Mammary epithelial cell (primary cell): ENCODE measurements at regions of chr14 and their contacts with region 1.

Region 1: DNA sequence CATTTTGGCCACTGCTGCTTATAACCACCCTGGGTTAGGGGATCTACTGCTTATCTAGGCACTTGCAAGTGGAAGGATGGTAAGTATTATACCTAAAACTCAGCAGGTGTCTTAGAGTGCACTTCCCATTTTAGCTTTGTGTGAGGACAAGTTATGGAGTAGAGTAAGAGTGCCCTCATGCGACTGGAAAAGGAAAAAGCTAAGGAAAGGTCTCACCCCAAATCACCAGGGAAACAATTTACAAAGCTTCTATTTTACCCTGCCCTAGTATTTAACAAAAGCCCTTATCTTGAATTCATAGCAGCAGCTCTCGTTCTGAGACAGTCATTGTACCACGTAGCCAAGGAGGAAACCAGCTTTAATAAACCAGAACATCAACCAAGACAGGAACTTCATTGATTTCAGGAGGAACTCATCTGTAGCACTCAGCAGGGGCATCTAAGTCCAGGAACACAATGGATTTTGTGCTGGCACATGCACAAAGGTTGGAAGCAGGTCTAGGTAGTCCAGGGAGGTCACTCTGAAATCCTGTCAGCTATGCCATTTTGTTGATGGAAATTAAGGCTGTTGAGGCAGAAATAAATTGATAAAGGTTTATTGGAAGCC is 2.9 kb downstream of the RDH12 start:
- DNase-seq: peak; percentile 54
- H3K4me3 ChIP-seq: no peak overlapping the region
- H3K27ac ChIP-seq: no peak overlapping the region
- H3K4me1 ChIP-seq: peaks cover 10% of the 10 kb centered on the region
- H3K27me3 ChIP-seq: no peaks in the 10 kb centered on the region
- CTCF ChIP-seq: peak; percentile 79 to 85

Region 2: GRCh38 chr14:67285876-67286452 is 418.6 kb before region 1 on chr14:
- CTCF ChIA-PET with region 1: no interaction called
- dilution Hi-C with region 1: no loop called
- in situ Hi-C with region 1: no loop called
- intact Hi-C with region 1: no loop called
- DNase-seq: peak; percentile 11
- H3K4me3 ChIP-seq: no peak overlapping the region
- H3K27ac ChIP-seq: no peak overlapping the region
- H3K4me1 ChIP-seq: no peaks in the 10 kb centered on the region
- H3K27me3 ChIP-seq: no peaks in the 10 kb centered on the region
- CTCF ChIP-seq: peak; percentile 38 to 53

Region 3: GRCh38 chr14:67426983-67427606 is 277.5 kb before region 1 on chr14:
- CTCF ChIA-PET with region 1: no interaction called
- dilution Hi-C with region 1: no loop called
- in situ Hi-C with region 1: loop called in 1 of 2 experiments (anchors 25 kb)
- intact Hi-C with region 1: loop called (anchors 1 kb)
- DNase-seq: peak; percentile 66
- H3K4me3 ChIP-seq: no peak overlapping the region
- H3K27ac ChIP-seq: no peak overlapping the region
- H3K4me1 ChIP-seq: peaks cover 12% of the 10 kb centered on the region
- H3K27me3 ChIP-seq: no peaks in the 10 kb centered on the region
- CTCF ChIP-seq: peak; percentile 75 to 84

Region 4: DNA sequence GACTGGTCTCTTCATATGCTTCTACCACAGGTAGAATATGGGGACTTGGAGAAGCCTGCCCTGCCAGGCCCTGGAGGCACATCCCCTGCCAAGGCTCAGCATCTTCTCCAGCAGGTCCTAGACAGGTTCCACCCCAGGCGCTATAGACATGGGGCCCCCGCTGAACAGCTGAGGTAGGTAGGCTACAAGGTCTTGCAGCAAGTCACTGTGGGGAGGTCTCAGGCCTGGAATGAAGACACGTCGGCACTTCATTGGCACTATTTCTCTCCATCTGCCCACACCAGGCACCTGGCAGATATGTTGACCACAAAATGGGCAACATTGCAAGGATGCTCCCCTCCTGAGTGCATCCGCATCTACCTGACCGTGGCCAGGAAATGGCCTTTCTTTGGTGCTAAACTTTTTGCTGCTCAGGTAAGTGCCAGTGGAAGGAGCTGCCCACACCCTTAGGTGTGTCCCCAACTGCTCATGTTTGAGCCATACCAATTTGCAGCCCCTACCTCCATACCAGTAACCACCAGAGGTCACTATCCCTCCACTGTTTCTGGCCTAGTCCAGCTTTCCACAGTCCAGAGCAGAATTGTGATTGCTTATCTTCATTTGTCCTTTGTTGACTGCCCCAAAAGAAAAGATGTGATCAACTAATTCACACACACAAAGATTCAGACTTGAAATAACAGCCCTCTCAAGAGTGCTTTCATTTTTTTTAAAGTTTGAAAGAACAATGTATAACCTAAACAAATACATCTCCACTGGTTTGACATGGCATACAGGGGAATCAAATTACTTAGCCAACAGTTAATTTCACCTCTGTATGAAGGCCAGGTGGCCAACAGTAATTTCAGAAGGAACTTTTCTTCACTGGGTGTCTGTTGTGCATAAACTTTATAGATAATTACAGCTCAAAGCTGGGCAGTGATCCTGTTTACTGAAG is 120.6 kb before region 1 on chr14:
- CTCF ChIA-PET with region 1: interaction called, 9 read pairs
- dilution Hi-C with region 1: no loop called
- in situ Hi-C with region 1: no loop called
- intact Hi-C with region 1: loop called (anchors 1 kb)
- DNase-seq: peak; percentile 32
- H3K4me3 ChIP-seq: no peak overlapping the region
- H3K27ac ChIP-seq: no peak overlapping the region
- H3K4me1 ChIP-seq: no peaks in the 10 kb centered on the region
- H3K27me3 ChIP-seq: no peaks in the 10 kb centered on the region
- CTCF ChIP-seq: peak; percentile 65 to 83

Region 5: DNA sequence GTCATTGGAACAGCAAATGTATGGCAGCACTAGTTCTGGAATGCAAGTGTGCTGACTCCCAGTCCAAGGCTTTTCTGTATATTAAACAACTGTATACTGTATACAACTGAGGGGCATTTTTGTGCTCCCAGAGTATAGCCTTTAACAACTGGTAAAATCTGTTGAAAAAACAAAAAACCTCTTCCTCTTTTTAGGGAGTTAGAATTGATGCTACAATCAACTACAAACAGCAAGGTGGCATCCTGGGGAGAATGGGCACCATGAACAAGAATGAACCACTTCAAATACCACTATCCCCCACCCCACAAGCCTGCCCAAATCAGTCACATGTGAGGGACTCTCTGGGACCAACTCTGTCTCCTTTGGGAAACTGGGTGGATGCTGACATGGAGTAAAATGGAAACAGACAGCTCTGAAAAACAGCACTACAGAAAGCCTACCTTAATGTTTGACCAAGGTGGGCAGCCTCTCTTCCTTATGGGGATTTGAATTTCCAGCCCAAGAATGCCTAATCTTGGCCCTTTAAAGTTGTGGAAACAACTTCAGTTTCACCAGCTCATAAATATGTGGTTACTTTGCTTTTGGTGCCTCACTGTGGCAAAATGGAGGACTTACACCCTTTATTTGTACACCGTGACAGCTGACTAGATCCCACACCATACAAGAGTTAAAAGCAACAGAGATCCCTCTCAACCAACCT is 37.7 kb before region 1 on chr14:
- CTCF ChIA-PET with region 1: no interaction called
- dilution Hi-C with region 1: no loop called
- in situ Hi-C with region 1: no loop called
- intact Hi-C with region 1: loop called (anchors 2 kb)
- DNase-seq: peak; percentile 51
- H3K4me3 ChIP-seq: no peak overlapping the region
- H3K27ac ChIP-seq: no peak overlapping the region
- H3K4me1 ChIP-seq: peaks cover 11% of the 10 kb centered on the region
- H3K27me3 ChIP-seq: no peaks in the 10 kb centered on the region
- CTCF ChIP-seq: peak; percentile 68 to 76

Region 6: DNA sequence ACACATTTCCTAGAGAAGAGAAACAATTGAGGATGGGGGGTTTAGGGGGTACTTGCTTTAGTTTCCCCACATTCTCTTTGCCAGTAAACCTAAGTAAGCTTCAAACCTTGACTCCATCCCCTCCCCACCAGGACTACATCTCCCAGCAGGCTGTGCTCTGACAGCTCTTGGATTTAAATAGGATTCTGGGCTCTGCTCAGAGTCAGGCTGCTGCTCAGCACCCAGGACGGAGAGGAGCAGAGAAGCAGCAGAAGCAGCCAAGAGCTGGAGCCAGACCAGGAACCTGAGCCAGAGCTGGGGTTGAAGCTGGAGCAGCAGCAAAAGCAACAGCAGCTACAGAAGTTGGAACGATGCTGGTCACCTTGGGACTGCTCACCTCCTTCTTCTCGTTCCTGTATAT is 17.7 kb after region 1 on chr14:
- CTCF ChIA-PET with region 1: no interaction called
- dilution Hi-C with region 1: no loop called
- in situ Hi-C with region 1: no loop called
- intact Hi-C with region 1: no loop called
- DNase-seq: peak; percentile 9
- H3K4me3 ChIP-seq: no peak overlapping the region
- H3K27ac ChIP-seq: no peak overlapping the region
- H3K4me1 ChIP-seq: peaks cover 8% of the 10 kb centered on the region
- H3K27me3 ChIP-seq: no peaks in the 10 kb centered on the region
- CTCF ChIP-seq: no peak

Region 7: DNA sequence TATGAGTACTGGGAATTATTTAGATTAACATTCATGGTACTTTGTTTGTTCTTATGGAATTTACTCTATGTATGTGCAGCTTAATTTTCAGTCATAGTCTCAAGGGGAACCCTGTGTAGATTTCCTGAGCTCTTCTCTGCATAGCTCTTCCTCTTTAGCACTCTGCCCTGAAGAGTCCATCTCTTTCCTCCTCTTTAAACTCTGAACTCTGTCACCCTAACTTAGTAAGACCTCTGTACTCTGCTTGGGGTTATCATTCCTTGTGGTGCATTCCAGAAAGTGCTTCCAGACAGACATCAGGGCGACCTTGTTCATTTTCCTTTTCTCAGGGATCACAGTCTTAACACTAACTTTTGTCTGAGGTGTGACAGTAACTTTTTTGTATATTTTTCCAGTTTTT is 294.2 kb after region 1 on chr14:
- CTCF ChIA-PET with region 1: no interaction called
- dilution Hi-C with region 1: no loop called
- in situ Hi-C with region 1: no loop called
- intact Hi-C with region 1: no loop called
- DNase-seq: no peak
- H3K4me3 ChIP-seq: no peak overlapping the region
- H3K27ac ChIP-seq: no peak overlapping the region
- H3K4me1 ChIP-seq: peaks cover 14% of the 10 kb centered on the region
- H3K27me3 ChIP-seq: peaks cover 1% of the 10 kb centered on the region
- CTCF ChIP-seq: no peak